CD8-positive, alpha-beta T cell (primary cell): ENCODE measurements at regions of chr4 and their contacts with region 1.

Region 1: DNA sequence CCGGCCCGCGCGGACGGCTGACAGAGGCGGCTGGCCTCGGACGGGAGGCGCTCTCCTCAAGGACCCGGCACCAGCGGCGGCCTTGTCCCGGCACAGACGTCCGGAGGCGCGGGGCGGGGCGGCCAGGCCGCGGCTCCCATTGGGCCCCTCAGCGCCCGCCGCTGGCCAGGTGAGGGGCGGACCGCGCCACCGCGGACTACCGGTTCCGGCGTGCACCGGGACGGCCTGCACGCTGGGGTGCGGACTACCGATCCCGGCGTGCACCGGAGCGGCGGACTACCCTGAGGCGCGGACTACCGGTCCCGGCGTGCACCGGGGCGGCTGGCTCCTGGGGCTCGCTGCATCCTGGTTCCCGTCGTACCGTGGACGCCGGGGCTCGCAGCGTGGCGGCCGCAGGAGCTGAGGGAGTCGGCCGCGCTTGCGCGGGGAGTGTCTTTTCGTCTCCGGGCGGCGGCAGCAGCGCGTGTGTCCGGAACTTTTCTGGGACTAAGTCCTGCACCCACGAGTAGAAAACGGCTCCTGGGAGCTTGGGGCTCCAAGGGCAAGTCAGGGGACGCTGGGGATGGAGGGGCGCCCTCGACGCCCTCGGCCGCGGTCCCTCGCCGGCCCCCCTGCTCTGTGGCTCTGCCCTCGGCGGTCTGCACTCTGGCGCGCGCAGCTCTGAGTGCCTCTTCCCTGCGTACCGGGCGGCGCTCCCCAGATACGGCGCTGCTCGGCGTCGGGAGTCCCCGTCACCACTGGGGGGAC is at the start of gene LETM1:
- DNase-seq: peak; percentile 73 to 96 (median 92)
- ATAC-seq: peak; percentile 96
- H3K4me3 ChIP-seq: peak within 1 kb of the TSS; percentile 83 to 91
- H3K4me3 Mint-ChIP-seq: peak within 1 kb of the TSS; percentile 80
- H3K27ac ChIP-seq: peak within 1 kb of the TSS; percentile 47 to 50
- H3K27ac Mint-ChIP-seq: peak within 1 kb of the TSS; percentile 45
- H3K4me1 ChIP-seq: peaks cover 19% of the 10 kb centered on the region
- H3K4me1 Mint-ChIP-seq: peaks cover 44% of the 10 kb centered on the region
- H3K27me3 ChIP-seq: no peaks in the 10 kb centered on the region
- H3K27me3 Mint-ChIP-seq: no peaks in the 10 kb centered on the region
- CTCF ChIP-seq: no peak
- total RNA-seq, gene LETM1: 22.7 to 25.9 TPM

Region 2: GRCh38 chr4:1579901-1580691 is 276.1 kb before region 1 on chr4:
- CTCF ChIA-PET with region 1: no interaction called
- POLR2A ChIA-PET with region 1: no interaction called
- intact Hi-C with region 1: loop called in 1 of 2 experiments (anchors 5 kb)
- DNase-seq: peak; percentile 83 to 96 (median 93)
- ATAC-seq: peak; percentile 82
- H3K4me3 ChIP-seq: peak overlapping the region; percentile 70 to 78
- H3K4me3 Mint-ChIP-seq: peak overlapping the region; percentile 79
- H3K27ac ChIP-seq: peak overlapping the region; percentile 66 to 73
- H3K27ac Mint-ChIP-seq: peak overlapping the region; percentile 79
- H3K4me1 ChIP-seq: no peaks in the 10 kb centered on the region
- H3K4me1 Mint-ChIP-seq: peaks cover 11% of the 10 kb centered on the region
- H3K27me3 ChIP-seq: no peaks in the 10 kb centered on the region
- H3K27me3 Mint-ChIP-seq: no peaks in the 10 kb centered on the region
- CTCF ChIP-seq: no peak

Region 3: DNA sequence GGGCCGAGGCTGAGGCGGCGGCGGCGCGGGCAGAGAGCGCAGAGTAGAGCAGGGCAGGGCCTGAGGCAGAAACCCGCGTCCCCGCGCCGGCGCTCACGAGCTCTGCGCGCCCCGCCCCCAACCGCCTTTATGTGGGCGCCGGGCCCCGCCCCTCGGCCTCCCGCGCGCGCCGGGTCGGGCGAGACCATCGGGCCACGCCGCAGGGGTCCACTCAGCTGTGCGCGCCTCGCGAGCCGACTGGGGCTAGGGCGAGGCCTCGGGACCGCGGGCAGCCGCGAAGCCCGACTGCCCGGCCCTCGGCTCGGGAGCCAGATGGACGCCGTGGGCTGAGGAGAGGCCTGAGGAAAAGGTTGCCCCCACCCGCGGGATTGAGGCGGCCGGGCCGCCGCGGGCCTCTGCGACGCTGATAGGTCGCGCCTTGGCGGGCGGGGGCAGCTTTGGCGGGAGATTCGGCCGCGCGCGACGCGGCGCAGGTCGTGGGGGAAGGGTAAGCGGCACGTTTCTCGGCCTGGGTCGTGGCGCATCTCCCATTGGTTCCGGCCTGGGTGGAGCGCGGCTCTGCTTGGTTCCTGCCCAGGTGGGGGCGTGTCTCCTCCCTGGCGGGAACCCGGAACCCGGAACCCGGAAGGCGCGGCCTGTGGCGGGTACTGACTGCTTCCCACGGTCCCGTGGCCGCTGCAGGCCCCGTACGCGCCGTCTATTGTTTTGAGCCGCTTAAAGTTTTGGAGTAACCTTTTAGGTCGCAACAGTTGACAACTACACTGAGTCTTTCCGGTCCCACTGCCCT is 143.8 kb before region 1 on chr4 and contains the start of gene SLBP:
- CTCF ChIA-PET with region 1: no interaction called
- POLR2A ChIA-PET with region 1: interaction called, 4 read pairs
- intact Hi-C with region 1: loop called (anchors 1 to 2 kb)
- DNase-seq: peak; percentile 96 to 99 (median 99)
- ATAC-seq: peak; percentile 87
- H3K4me3 ChIP-seq: peak within 1 kb of the TSS; percentile 82 to 95
- H3K4me3 Mint-ChIP-seq: peak within 1 kb of the TSS; percentile 94
- H3K27ac ChIP-seq: peak within 1 kb of the TSS; percentile 95 to 97
- H3K27ac Mint-ChIP-seq: peak within 1 kb of the TSS; percentile 94
- H3K4me1 ChIP-seq: peaks cover 42% of the 10 kb centered on the region
- H3K4me1 Mint-ChIP-seq: peaks cover 60% of the 10 kb centered on the region
- H3K27me3 ChIP-seq: no peaks in the 10 kb centered on the region
- H3K27me3 Mint-ChIP-seq: no peaks in the 10 kb centered on the region
- CTCF ChIP-seq: no peak
- total RNA-seq, gene SLBP: 61.2 to 62.6 TPM

Region 4: GRCh38 chr4:1809754-1810511 is 46.3 kb before region 1 on chr4:
- CTCF ChIA-PET with region 1: no interaction called
- POLR2A ChIA-PET with region 1: no interaction called
- intact Hi-C with region 1: no loop called
- DNase-seq: peak; percentile 35 to 75 (median 61)
- ATAC-seq: peak; percentile 71
- H3K4me3 ChIP-seq: no peak overlapping the region
- H3K4me3 Mint-ChIP-seq: no peak overlapping the region
- H3K27ac ChIP-seq: no peak overlapping the region
- H3K27ac Mint-ChIP-seq: no peak overlapping the region
- H3K4me1 ChIP-seq: no peaks in the 10 kb centered on the region
- H3K4me1 Mint-ChIP-seq: no peaks in the 10 kb centered on the region
- H3K27me3 ChIP-seq: no peaks in the 10 kb centered on the region
- H3K27me3 Mint-ChIP-seq: no peaks in the 10 kb centered on the region
- CTCF ChIP-seq: peak; percentile 72

Region 5: GRCh38 chr4:1826531-1827350 is 29.5 kb before region 1 on chr4:
- CTCF ChIA-PET with region 1: no interaction called
- POLR2A ChIA-PET with region 1: no interaction called
- intact Hi-C with region 1: no loop called
- DNase-seq: no peak
- ATAC-seq: no peak
- H3K4me3 ChIP-seq: no peak overlapping the region
- H3K4me3 Mint-ChIP-seq: no peak overlapping the region
- H3K27ac ChIP-seq: no peak overlapping the region
- H3K27ac Mint-ChIP-seq: no peak overlapping the region
- H3K4me1 ChIP-seq: no peaks in the 10 kb centered on the region
- H3K4me1 Mint-ChIP-seq: peaks cover 5% of the 10 kb centered on the region
- H3K27me3 ChIP-seq: no peaks in the 10 kb centered on the region
- H3K27me3 Mint-ChIP-seq: no peaks in the 10 kb centered on the region
- CTCF ChIP-seq: no peak

Region 6: DNA sequence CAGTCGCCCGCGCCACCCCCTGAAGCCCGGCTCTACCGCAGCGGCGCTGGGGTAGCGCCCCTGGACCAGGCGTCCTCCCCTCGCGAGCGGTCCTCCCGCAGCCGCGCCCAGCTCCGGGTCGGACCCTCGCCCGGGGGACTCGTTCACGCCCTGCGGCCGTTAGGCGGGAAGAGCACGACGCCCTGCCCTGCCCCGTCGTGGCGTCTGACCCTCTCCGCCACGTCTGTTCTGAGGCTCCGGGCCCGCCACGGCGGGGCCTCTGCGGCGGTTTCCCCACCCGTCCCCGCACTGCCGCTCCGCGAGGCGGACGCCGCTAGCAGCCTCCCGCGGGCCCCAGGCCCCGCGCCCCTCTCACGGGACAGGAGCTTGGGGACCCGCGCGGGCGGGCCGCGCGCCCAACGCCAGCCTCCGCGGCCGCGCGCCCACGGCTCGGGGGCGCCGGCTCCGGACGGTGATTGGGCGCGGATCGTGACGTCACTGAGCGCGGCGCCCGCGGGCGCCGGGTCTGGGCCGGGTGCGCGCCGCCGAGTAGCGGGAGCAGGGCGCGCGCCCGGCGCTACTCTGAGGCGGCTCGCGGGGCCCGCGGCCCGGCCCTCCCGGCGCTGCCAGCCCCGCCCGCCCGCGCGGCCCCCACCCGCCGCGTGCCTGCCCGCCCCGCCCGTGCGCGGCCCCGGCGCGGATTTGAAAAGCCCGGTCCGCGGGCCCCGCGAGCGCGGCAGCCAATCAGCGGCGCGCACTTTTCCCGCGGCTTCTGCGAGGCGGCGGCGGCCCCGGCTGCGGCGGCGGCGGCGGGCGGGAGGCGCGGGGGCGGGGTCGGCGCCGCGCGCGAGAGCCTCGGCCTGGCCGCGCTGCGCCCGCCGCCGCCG is 14.6 kb after region 1 on chr4 and contains the start of gene NSD2:
- CTCF ChIA-PET with region 1: no interaction called
- POLR2A ChIA-PET with region 1: interaction called, 32 read pairs
- intact Hi-C with region 1: loop called (anchors 1 kb)
- DNase-seq: peak; percentile 81 to 97 (median 88)
- ATAC-seq: peak; percentile 64
- H3K4me3 ChIP-seq: peak within 1 kb of the TSS; percentile 66 to 98
- H3K4me3 Mint-ChIP-seq: peak within 1 kb of the TSS; percentile 83
- H3K27ac ChIP-seq: peak within 1 kb of the TSS; percentile 81 to 98
- H3K27ac Mint-ChIP-seq: peak within 1 kb of the TSS; percentile 89
- H3K4me1 ChIP-seq: peaks cover 21% of the 10 kb centered on the region
- H3K4me1 Mint-ChIP-seq: peaks cover 31% of the 10 kb centered on the region
- H3K27me3 ChIP-seq: no peaks in the 10 kb centered on the region
- H3K27me3 Mint-ChIP-seq: no peaks in the 10 kb centered on the region
- CTCF ChIP-seq: no peak
- total RNA-seq, gene NSD2: 27.3 to 32.5 TPM

Region 7: DNA sequence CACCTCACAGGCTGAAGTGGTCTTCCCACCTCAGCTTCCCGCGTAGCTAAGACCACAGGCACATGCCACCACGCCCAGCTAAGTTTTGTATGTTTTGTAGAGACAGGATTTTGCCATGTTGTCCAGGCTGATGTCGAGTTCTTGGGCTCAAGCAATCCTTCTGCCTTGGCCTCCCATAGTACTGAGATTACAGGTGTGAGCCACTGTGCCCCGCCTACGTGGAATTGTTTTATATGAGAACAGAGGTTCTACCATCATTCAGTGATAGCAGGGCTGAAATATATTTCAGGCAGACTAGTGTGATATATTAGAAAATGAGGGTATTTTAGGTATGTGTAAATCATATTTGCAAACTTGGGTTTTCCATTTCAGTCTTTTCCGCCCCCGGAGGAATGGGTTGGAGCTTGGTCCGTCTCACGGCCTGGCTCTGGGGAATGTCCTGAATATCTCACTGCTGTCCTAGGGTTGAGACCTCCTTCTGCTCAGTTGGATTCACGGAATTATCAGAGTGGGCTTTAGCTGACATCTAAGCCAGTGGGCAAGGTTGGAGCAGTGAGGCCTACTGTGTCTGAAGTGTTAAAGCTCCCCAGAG is 34.9 kb after region 1 on chr4:
- CTCF ChIA-PET with region 1: no interaction called
- POLR2A ChIA-PET with region 1: no interaction called
- intact Hi-C with region 1: no loop called
- DNase-seq: no peak
- ATAC-seq: no peak
- H3K4me3 ChIP-seq: no peak overlapping the region
- H3K4me3 Mint-ChIP-seq: no peak overlapping the region
- H3K27ac ChIP-seq: no peak overlapping the region
- H3K27ac Mint-ChIP-seq: no peak overlapping the region
- H3K4me1 ChIP-seq: no peaks in the 10 kb centered on the region
- H3K4me1 Mint-ChIP-seq: peaks cover 14% of the 10 kb centered on the region
- H3K27me3 ChIP-seq: no peaks in the 10 kb centered on the region
- H3K27me3 Mint-ChIP-seq: no peaks in the 10 kb centered on the region
- CTCF ChIP-seq: no peak

Region 8: GRCh38 chr4:2281575-2282343 is 425.5 kb after region 1 on chr4:
- CTCF ChIA-PET with region 1: no interaction called
- POLR2A ChIA-PET with region 1: no interaction called
- intact Hi-C with region 1: no loop called
- DNase-seq: peak; percentile 73 to 98 (median 85)
- ATAC-seq: peak; percentile 83
- H3K4me3 ChIP-seq: peak overlapping the region in 1 of 2 experiments; percentile 30
- H3K4me3 Mint-ChIP-seq: peak overlapping the region; percentile 78
- H3K27ac ChIP-seq: peak overlapping the region; percentile 67 to 94
- H3K27ac Mint-ChIP-seq: peak overlapping the region; percentile 99
- H3K4me1 ChIP-seq: peaks cover 46% of the 10 kb centered on the region
- H3K4me1 Mint-ChIP-seq: peaks cover 41% of the 10 kb centered on the region
- H3K27me3 ChIP-seq: no peaks in the 10 kb centered on the region
- H3K27me3 Mint-ChIP-seq: no peaks in the 10 kb centered on the region
- CTCF ChIP-seq: peak; percentile 72

Region 9: DNA sequence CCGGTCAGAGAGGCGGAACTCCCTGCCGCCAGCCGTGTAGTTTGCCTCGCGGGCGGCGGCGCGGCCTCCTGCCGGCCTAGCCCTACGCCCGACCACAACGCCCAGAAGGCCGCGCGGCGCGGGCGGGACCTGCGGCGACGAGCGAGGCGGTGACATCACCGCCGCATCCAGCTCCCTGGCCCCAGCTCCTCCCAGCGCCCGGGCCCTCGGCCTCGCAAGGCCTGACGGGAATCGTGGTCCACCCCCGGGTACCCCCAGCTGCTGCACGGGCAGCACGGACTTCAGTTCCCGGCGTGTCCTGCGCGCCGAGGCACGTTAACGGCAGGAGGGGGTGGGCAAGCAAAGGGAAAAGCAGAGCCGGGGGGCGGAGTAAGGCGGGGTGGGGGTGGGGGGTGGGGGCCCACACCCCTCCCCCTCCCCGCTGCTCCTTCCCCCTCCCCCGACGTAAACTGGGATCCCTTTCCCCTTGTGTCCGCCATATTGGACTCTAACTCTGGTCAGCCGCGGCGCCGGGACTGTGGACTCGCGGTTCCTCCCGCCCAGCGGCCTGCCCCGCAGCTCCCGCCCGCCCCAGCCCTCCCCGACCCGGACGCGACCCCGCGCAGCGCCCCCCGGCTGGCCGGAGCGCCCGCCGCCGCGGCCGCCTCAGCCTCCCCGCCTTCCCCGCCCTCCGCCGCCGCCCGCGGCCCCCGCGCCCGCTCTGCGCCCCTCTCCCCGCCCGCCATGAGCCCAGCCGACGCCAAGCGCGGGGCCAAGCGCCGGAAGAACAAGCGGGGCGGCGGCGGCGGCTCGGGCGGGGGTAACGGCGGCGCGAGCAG is 680.2 kb after region 1 on chr4 and contains the start of gene FAM193A:
- CTCF ChIA-PET with region 1: no interaction called
- POLR2A ChIA-PET with region 1: no interaction called
- intact Hi-C with region 1: loop called in 1 of 2 experiments (anchors 2 kb)
- DNase-seq: peak; percentile 97 to 100 (median 99)
- ATAC-seq: peak; percentile 94
- H3K4me3 ChIP-seq: peak within 1 kb of the TSS; percentile 64 to 67
- H3K4me3 Mint-ChIP-seq: peak within 1 kb of the TSS; percentile 90
- H3K27ac ChIP-seq: peak within 1 kb of the TSS; percentile 71 to 76
- H3K27ac Mint-ChIP-seq: peak within 1 kb of the TSS; percentile 92
- H3K4me1 ChIP-seq: peaks cover 26% of the 10 kb centered on the region
- H3K4me1 Mint-ChIP-seq: peaks cover 29% of the 10 kb centered on the region
- H3K27me3 ChIP-seq: no peaks in the 10 kb centered on the region
- H3K27me3 Mint-ChIP-seq: no peaks in the 10 kb centered on the region
- CTCF ChIP-seq: no peak
- total RNA-seq, gene FAM193A: 29.0 to 30.2 TPM